ENCODE measurements at regions of chr7 and their contacts with region 1.

Region 1: GRCh38 chr7:22559829-22560489 is 60.0 kb upstream of the STEAP1B start:
- DNase-seq: no peak
- H3K4me3 ChIP-seq: no peak overlapping the region
- CTCF ChIP-seq: peak; percentile 83

Region 2: DNA sequence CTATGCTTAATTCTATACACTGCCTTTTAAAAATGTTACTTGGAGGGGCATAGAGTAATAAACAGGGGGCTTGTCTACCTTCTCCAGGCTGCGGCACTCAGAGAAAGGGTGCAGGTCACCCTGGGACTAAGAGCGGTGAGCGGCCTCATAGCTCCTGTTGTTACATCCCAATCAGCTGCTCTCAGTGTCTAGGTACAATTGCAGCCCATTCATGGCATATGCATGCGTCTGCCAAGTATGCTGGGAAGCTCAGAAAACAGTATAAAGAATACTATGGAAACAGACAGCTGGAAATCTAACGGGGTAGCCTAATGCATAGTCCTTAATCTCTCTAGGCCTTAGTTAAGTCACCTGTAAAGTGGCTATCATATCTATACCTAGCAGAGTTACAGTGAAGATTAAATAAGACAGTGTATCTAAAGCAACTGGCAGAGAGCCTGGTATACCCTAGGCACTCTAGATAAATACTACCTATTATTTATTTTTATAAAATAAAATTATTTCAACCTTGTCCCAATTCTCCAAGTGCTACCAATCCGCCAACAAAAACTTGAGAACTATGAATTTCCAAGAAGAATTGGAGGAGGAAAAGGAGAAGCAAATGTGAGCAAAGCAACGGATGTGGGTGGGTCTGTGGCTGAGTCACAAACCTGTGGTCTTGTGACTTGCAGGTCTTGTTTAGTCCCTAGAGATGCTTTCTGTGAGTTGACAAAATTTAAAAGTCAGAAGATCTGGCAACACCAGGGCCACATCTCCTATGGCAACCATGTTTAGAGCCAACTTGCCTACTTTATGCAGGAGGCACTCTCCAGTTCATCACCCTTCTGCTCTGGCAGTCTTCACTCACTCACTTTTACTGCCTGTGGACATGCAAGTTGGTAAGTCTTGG is 386.0 kb before region 1 on chr7:
- CTCF ChIA-PET with region 1: no interaction called
- POLR2A ChIA-PET with region 1: no interaction called
- DNase-seq: no peak
- H3K4me3 ChIP-seq: no peak overlapping the region
- CTCF ChIP-seq: no peak

Region 3: DNA sequence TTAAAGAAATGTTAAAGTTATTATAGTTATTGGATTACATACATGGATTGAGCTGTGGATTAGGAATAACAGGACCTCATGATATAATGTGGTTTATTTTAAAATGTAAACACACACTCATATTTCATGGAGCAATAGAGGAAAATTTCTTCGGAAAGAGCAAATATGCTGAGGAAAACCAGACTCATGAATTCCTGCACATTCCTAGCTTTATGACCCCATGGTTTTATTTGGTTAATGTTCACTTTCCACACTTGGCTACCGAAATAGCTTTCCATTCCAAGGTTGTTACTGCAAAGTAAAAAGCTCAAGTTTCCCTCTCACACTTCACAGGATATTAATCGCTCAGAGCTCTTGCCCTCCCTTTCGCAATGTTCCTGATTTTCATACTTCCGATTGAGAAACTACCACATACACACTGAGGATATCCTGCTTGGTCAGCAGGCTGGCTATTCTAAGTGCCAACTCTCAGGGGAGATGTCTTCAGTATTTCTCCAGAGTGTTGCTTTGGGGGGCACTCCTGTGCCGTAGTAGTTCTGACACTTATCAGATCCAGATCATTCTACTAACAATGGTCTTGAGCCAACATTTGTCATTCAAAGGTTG is 17.5 kb after region 1 on chr7:
- CTCF ChIA-PET with region 1: interaction called, 14 read pairs
- POLR2A ChIA-PET with region 1: interaction called, 14 read pairs
- DNase-seq: peak; percentile 98
- H3K4me3 ChIP-seq: no peak overlapping the region
- CTCF ChIP-seq: no peak

Region 4: GRCh38 chr7:22726345-22727185 is 166.6 kb after region 1 on chr7:
- CTCF ChIA-PET with region 1: interaction called, 202 read pairs
- POLR2A ChIA-PET with region 1: interaction called, 44 read pairs
- DNase-seq: peak; percentile 86
- H3K4me3 ChIP-seq: peak overlapping the region; percentile 49
- CTCF ChIP-seq: peak; percentile 62

Region 5: GRCh38 chr7:22782616-22783232 is 222.8 kb after region 1 on chr7:
- CTCF ChIA-PET with region 1: interaction called, 72 read pairs
- POLR2A ChIA-PET with region 1: interaction called, 4 read pairs
- DNase-seq: no peak
- H3K4me3 ChIP-seq: no peak overlapping the region
- CTCF ChIP-seq: peak; percentile 62

Region 6: GRCh38 chr7:22822486-22823141 is 262.7 kb after region 1 on chr7 and contains the start of gene TOMM7:
- CTCF ChIA-PET with region 1: interaction called, 25 read pairs
- POLR2A ChIA-PET with region 1: interaction called, 6 read pairs
- DNase-seq: peak; percentile 76
- H3K4me3 ChIP-seq: peak within 1 kb of the TSS; percentile 96
- CTCF ChIP-seq: peak; percentile 19

Region 7: GRCh38 chr7:22854158-22855048 is 294.4 kb after region 1 on chr7:
- CTCF ChIA-PET with region 1: interaction called, 27 read pairs
- POLR2A ChIA-PET with region 1: interaction called, 7 read pairs
- DNase-seq: no peak
- H3K4me3 ChIP-seq: peak overlapping the region; percentile 66
- CTCF ChIP-seq: no peak

Region 8: GRCh38 chr7:22962775-22963358 is 402.9 kb after region 1 on chr7:
- CTCF ChIA-PET with region 1: no interaction called
- POLR2A ChIA-PET with region 1: no interaction called
- DNase-seq: no peak
- H3K4me3 ChIP-seq: no peak overlapping the region
- CTCF ChIP-seq: no peak

Region 9: GRCh38 chr7:23072048-23072447 is 512.1 kb after region 1 on chr7:
- CTCF ChIA-PET with region 1: interaction called, 10 read pairs
- POLR2A ChIA-PET with region 1: no interaction called
- DNase-seq: no peak
- H3K4me3 ChIP-seq: no peak overlapping the region
- CTCF ChIP-seq: no peak